Heart right ventricle (tissue), 16 donors: ENCODE measurements at regions of chr12 and their contacts with region 1.

Region 1: DNA sequence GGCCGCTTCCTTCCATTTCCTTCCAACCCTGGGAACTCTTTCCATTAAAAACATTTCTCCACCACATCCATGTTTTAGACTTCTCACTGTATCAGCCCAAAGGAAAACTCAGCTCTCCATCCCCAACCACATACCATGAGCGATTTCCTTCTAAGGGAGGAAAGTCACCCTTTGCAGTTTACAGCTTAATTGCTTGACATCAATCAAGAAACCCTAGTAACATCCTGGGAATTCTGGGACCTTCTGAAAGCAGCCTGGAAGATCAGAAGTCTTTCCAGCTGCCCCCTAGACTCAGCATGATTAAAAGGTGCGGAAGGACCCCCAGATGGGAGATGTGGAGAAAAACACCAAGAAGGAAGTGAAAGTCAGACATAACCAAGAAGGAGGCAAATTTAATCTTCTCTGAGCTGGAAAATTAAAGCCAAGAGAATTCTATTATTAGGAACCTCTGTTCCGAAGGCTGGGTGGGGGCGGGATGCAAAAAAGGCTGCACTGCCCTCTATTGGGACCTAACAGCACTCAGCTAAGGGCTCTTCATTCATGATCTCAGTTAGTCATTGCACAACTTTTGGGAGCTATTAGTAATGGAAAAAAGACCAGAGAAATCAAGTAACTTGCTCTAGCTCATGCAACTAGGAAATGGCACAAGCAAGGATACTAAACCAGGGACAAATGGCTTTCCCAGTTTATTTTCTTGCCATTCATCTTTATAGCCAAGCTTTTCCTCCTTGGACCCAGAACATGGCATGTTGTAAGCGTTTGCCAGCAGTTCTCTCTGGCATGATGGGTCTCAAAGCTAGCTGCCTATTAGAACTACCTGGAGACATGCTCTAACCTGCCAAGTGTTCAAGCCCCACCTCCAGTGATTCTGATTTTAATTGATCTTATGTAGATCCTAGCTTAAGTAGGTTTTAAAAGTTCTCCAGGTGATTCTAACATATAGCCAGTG is 73.1 kb upstream of the PLXNC1 start:
- DNase-seq: peak; percentile 57 to 73
- ATAC-seq: peak; percentile 81 to 94 (median 90)
- H3K4me3 ChIP-seq: peak overlapping the region in 4 of 10 donors; percentile 3 to 25 (median 14)
- H3K27ac ChIP-seq: peak overlapping the region; percentile 68 to 94 (median 89)
- H3K4me1 ChIP-seq: peaks cover 8 to 33% (median 21%) of the 10 kb centered on the region in 9 donors
- H3K27me3 ChIP-seq: no peaks in the 10 kb centered on the region
- CTCF ChIP-seq: peak; percentile 48 to 84 (median 73)

Region 2: DNA sequence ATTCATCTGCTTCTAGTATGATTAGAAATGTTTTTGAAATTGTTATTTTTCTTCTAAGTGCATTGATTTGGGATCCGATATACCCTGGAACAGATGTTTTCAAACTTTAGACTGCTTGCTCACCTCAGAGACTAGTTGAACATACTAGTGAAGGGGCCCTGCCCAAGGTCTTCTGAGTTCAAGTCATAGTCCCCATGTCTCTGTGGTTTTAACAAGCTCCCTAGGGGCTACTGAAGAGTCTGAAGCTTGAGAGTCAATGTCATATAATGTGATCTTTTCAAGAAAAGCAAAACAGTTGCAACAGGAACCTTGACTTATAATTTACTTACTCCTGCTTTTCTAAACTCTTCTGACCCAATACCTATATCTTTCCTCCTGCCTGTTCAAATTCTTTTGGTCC is 626.0 kb before region 1 on chr12:
- intact Hi-C with region 1: no loop called
- DNase-seq: no peak
- ATAC-seq: no peak
- H3K4me3 ChIP-seq: no peak overlapping the region
- H3K27ac ChIP-seq: no peak overlapping the region
- H3K4me1 ChIP-seq: peaks cover 0 to 4% (median 0%) of the 10 kb centered on the region in 9 donors
- H3K27me3 ChIP-seq: peaks cover 0 to 3% (median 0%) of the 10 kb centered on the region in 7 donors
- CTCF ChIP-seq: no peak

Region 3: GRCh38 chr12:93682846-93683261 is 392.4 kb before region 1 on chr12:
- intact Hi-C with region 1: loop called in 2 of 10 experiments (anchors 10 kb)
- DNase-seq: peak; percentile 50 to 51
- ATAC-seq: peak; percentile 72 to 89 (median 84)
- H3K4me3 ChIP-seq: peak overlapping the region in 1 of 10 donors; percentile 15
- H3K27ac ChIP-seq: peak overlapping the region; percentile 56 to 99 (median 88)
- H3K4me1 ChIP-seq: peaks cover 3 to 86% (median 50%) of the 10 kb centered on the region in 9 donors
- H3K27me3 ChIP-seq: no peaks in the 10 kb centered on the region
- CTCF ChIP-seq: no peak

Region 4: DNA sequence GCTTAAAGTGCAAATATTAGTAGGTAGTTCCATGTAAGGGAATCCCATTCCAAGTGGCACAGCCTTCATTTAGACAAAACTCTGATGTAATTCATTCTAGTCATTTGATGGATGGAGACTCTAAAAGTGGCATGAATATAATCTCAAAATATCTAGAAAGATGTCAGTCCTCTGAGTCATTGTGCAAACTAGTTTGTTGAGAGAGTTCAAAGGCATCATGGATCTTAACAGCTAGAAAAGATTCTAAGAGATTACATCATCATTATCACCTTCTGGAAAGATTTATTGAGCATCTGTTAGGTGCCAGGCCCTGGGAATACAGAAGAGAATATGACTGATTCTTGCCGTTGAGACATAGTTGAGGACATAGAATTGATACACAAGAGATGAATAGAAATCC is 367.4 kb before region 1 on chr12:
- intact Hi-C with region 1: no loop called
- DNase-seq: no peak
- ATAC-seq: no peak
- H3K4me3 ChIP-seq: no peak overlapping the region
- H3K27ac ChIP-seq: peak overlapping the region in 1 of 10 donors; percentile 26
- H3K4me1 ChIP-seq: peaks cover 0 to 51% (median 32%) of the 10 kb centered on the region in 9 donors
- H3K27me3 ChIP-seq: no peaks in the 10 kb centered on the region
- CTCF ChIP-seq: no peak

Region 5: DNA sequence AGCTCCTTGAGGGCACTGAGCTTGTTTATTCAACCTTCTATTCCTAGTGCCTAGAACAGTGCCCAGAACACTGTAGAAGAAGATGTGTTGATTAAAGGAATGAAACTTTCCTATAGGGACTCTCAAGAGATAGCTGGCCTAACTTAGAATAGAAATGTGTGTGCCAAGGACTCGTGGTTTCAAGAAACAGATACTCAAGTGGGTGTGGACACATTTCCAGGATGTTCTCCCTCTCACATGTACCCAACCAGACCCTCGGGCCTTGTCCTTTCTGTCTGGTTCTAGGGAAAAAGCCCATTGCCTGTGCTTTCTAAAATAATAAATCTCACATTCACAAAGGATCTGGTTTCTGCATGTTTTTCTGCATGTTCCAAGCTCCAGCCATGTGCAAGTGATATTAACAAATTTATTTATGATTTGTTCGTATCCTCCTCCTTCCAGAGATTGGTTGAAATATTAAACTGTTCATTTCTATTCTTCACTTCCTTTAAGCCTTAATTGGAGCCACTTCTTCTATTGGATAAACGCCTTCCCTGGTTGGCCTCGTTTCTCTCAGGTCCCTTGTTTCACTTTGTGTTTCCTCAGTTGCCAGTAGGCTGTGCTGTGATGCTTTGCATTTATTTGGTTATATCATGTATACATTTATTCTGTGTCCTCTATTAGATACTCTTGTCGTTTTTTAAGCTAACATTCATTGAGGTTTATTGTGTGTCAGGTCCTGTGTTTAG is 308.3 kb before region 1 on chr12:
- intact Hi-C with region 1: loop called in 6 of 10 experiments (anchors 5 to 10 kb)
- DNase-seq: peak in 1 of 2 donors; percentile 69
- ATAC-seq: peak; percentile 71 to 91 (median 87)
- H3K4me3 ChIP-seq: no peak overlapping the region
- H3K27ac ChIP-seq: peak overlapping the region; percentile 5 to 77 (median 63)
- H3K4me1 ChIP-seq: peaks cover 7 to 69% (median 41%) of the 10 kb centered on the region in 9 donors
- H3K27me3 ChIP-seq: no peaks in the 10 kb centered on the region
- CTCF ChIP-seq: peak; percentile 30 to 83 (median 68)

Region 6: GRCh38 chr12:93778306-93778705 is 296.9 kb before region 1 on chr12:
- intact Hi-C with region 1: loop called in 1 of 10 experiments (anchors 5 kb)
- DNase-seq: peak in 1 of 2 donors; percentile 82
- ATAC-seq: peak; percentile 78 to 96 (median 92)
- H3K4me3 ChIP-seq: peak overlapping the region in 3 of 10 donors; percentile 3 to 18 (median 10)
- H3K27ac ChIP-seq: peak overlapping the region; percentile 72 to 93 (median 87)
- H3K4me1 ChIP-seq: peaks cover 16 to 62% (median 50%) of the 10 kb centered on the region in 9 donors
- H3K27me3 ChIP-seq: no peaks in the 10 kb centered on the region
- CTCF ChIP-seq: no peak

Region 7: DNA sequence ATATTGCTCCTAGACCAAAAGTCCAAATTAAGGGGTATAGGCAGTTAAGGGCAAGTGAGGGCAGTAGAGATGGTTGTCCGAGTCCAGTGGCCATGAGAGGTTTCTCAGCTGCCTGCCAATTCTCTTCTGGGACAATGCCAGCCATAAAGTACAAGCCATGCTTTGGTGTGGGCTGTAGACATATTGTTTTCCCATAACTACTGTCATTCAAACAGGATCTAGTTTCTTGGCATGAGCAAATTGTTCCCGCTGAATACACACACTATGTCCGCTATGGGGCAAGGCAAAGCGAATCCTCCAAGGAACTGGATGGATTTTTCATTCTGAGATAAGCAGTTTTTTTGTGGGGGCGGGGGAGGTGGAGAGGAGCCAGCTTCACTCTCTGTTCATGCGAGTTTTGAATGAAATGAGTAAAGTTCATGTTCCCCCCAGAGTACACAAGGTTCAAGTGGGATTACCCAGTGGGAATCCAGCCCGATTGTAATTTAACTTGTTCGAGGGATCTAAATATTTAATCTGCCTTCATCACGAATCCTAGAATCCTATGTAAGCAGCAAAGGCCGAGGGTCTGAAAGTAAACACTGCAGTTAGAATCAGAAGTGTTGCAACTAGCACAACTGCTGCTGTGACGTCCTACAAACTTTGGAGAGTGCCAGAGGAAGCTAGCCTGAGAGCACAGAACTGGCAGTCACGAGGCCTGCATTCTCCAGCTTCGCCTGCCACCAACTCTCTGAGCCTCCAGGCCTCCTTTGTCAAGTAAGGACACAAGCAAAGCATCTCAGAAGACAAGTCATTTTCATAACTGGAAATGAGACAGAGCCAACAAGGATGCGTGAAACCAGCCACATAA is 261.1 kb before region 1 on chr12:
- intact Hi-C with region 1: loop called in 4 of 10 experiments (anchors 10 kb)
- DNase-seq: peak; percentile 74 to 86
- ATAC-seq: peak; percentile 80 to 94 (median 90)
- H3K4me3 ChIP-seq: peak overlapping the region in 7 of 10 donors; percentile 1 to 29 (median 18)
- H3K27ac ChIP-seq: peak overlapping the region; percentile 80 to 96 (median 90)
- H3K4me1 ChIP-seq: peaks cover 25 to 73% (median 62%) of the 10 kb centered on the region in 9 donors
- H3K27me3 ChIP-seq: no peaks in the 10 kb centered on the region
- CTCF ChIP-seq: peak in 3 of 9 donors; percentile 11 to 26 (median 12)

Region 8: DNA sequence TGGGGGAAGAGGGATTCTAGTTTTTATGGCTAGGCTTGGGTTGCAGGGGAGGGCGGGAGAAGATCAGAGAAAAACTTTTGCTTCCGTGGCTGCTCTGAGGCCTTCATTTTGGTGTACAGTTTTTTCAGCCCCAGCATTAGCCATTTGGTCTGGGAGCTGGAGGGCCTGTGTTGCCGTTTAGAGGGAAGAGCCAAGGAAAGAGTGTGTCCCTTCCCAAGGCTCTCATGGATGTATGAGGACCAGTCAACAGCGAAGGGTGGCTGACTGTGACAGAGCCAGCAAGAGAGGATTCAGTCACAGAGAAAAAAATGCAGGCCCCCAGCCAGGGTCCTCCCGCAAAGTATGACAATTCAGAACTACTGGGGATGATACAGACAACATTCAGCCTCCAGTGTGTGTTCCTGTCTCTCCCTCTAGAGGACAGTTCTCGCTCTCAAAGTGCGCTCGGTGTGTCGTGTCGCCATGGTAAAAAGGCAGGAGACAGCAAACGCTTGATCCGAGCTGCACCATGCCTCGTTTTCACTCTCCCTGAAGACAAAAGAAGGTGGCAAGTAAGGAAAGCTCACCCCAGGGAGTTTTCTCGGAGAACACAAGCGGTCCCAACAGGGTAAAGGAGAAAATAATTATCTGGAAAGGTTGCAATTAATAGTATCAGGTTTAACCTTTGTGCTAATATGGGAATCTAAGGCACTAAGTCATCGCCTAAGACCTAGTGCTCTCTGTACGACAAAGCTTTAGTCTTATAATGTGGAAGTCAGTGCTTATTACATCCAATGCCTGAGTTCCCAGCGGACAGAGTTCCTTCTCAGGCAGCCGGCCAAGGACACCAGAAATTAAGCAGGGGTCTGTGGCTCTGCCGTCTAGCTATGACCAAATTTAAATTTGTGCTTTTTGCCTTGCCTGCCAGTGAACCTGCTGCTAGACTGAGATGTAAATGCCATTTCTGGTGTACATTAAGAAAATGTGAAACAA is 84.1 kb before region 1 on chr12:
- intact Hi-C with region 1: loop called in 6 of 10 experiments (anchors 1 to 5 kb)
- DNase-seq: peak; percentile 41 to 68
- ATAC-seq: peak; percentile 60 to 97 (median 94)
- H3K4me3 ChIP-seq: peak overlapping the region in 6 of 10 donors; percentile 22 to 33 (median 28)
- H3K27ac ChIP-seq: peak overlapping the region in 9 of 10 donors; percentile 27 to 72 (median 51)
- H3K4me1 ChIP-seq: peaks cover 0 to 23% (median 12%) of the 10 kb centered on the region in 9 donors
- H3K27me3 ChIP-seq: no peaks in the 10 kb centered on the region
- CTCF ChIP-seq: peak; percentile 19 to 74 (median 49)

Region 9: GRCh38 chr12:94047741-94048567 is 27.3 kb before region 1 on chr12:
- intact Hi-C with region 1: loop called in 1 of 10 experiments (anchors 2 kb)
- DNase-seq: peak in 1 of 2 donors; percentile 11
- ATAC-seq: peak; percentile 68 to 94 (median 86)
- H3K4me3 ChIP-seq: no peak overlapping the region
- H3K27ac ChIP-seq: peak overlapping the region in 9 of 10 donors; percentile 11 to 86 (median 74)
- H3K4me1 ChIP-seq: peaks cover 4 to 28% (median 13%) of the 10 kb centered on the region in 9 donors
- H3K27me3 ChIP-seq: no peaks in the 10 kb centered on the region
- CTCF ChIP-seq: no peak